B cell (primary cell): ENCODE measurements at regions of chr2 and their contacts with region 1.

Region 1: GRCh38 chr2:127526149-127527000 is at the start of gene IWS1:
- DNase-seq: peak; percentile 97
- ATAC-seq: peak; percentile 87
- H3K4me3 ChIP-seq: peak within 1 kb of the TSS; percentile 67 to 98 (median 91)
- H3K4me3 Mint-ChIP-seq: peak within 1 kb of the TSS; percentile 99
- H3K27ac ChIP-seq: peak within 1 kb of the TSS; percentile 95 to 98
- H3K27ac Mint-ChIP-seq: peak within 1 kb of the TSS; percentile 98
- H3K4me1 ChIP-seq: peaks cover 17 to 21% of the 10 kb centered on the region in 2 donors
- H3K4me1 Mint-ChIP-seq: peaks cover 36% of the 10 kb centered on the region
- H3K27me3 ChIP-seq: no peaks in the 10 kb centered on the region
- H3K27me3 Mint-ChIP-seq: no peaks in the 10 kb centered on the region
- CTCF ChIP-seq: no peak
- total RNA-seq, gene IWS1: 45.9 and 49.6 TPM in 2 replicates

Region 2: DNA sequence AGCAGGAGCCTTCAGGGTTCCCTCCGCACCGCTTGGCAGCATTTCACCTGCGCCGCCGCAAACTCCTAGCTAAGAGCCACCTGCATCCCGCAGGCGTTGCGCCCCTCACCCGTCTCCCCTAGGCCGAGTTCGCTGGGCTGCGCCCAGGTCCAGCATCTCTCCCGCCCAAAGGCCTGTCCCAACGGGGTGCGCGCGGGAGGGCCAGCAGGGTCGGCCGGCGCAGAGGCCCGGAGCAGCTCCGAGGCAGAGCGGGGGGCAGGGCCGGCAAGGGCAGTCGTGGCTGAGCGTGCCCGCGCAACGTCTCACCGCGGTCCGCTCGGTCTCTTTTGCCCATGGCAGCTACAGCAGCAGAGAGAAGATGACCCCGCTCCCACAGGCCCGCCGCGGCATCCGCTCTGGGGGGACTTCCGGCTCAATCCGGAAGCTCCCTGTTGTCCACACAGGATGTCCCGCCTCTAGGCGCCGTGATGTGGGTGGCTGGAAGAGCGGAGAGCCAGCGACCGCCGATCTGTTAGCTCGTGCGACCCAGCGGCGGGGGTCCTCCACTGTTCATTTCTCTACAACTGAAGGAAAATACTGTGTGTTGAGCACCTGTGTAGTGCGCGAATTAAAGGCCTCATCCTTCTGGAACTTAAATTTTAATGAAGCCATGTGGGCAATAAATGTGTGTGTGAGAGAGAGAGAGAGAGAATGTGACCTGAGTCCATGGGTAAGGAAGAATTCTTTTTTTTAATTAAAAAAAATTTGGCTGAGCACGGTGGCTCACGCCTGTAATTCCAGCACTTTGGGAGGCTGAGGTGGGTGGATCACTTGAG is 232.4 kb before region 1 on chr2 and contains the start of gene ERCC3:
- CTCF ChIA-PET with region 1: no interaction called
- POLR2A ChIA-PET with region 1: no interaction called
- intact Hi-C with region 1: loop called (anchors 1 kb)
- DNase-seq: peak; percentile 86
- ATAC-seq: peak; percentile 96
- H3K4me3 ChIP-seq: peak within 1 kb of the TSS; percentile 82 to 97 (median 88)
- H3K4me3 Mint-ChIP-seq: peak within 1 kb of the TSS; percentile 100
- H3K27ac ChIP-seq: peak within 1 kb of the TSS; percentile 46 to 84
- H3K27ac Mint-ChIP-seq: peak within 1 kb of the TSS; percentile 95
- H3K4me1 ChIP-seq: peaks cover 5 to 22% of the 10 kb centered on the region in 2 donors
- H3K4me1 Mint-ChIP-seq: peaks cover 31% of the 10 kb centered on the region
- H3K27me3 ChIP-seq: no peaks in the 10 kb centered on the region
- H3K27me3 Mint-ChIP-seq: no peaks in the 10 kb centered on the region
- CTCF ChIP-seq: no peak
- total RNA-seq, gene ERCC3: 74.8 and 79.3 TPM in 2 replicates

Region 3: GRCh38 chr2:127415593-127416505 is 110.5 kb before region 1 on chr2:
- CTCF ChIA-PET with region 1: no interaction called
- POLR2A ChIA-PET with region 1: no interaction called
- intact Hi-C with region 1: loop called (anchors 5 kb)
- DNase-seq: peak; percentile 88
- ATAC-seq: peak; percentile 89
- H3K4me3 ChIP-seq: peak overlapping the region; percentile 51 to 72 (median 60)
- H3K4me3 Mint-ChIP-seq: peak overlapping the region; percentile 88
- H3K27ac ChIP-seq: no peak overlapping the region
- H3K27ac Mint-ChIP-seq: peak overlapping the region; percentile 65
- H3K4me1 ChIP-seq: peaks cover 31 to 37% of the 10 kb centered on the region in 2 donors
- H3K4me1 Mint-ChIP-seq: peaks cover 52% of the 10 kb centered on the region
- H3K27me3 ChIP-seq: no peaks in the 10 kb centered on the region
- H3K27me3 Mint-ChIP-seq: no peaks in the 10 kb centered on the region
- CTCF ChIP-seq: peak; percentile 90

Region 4: DNA sequence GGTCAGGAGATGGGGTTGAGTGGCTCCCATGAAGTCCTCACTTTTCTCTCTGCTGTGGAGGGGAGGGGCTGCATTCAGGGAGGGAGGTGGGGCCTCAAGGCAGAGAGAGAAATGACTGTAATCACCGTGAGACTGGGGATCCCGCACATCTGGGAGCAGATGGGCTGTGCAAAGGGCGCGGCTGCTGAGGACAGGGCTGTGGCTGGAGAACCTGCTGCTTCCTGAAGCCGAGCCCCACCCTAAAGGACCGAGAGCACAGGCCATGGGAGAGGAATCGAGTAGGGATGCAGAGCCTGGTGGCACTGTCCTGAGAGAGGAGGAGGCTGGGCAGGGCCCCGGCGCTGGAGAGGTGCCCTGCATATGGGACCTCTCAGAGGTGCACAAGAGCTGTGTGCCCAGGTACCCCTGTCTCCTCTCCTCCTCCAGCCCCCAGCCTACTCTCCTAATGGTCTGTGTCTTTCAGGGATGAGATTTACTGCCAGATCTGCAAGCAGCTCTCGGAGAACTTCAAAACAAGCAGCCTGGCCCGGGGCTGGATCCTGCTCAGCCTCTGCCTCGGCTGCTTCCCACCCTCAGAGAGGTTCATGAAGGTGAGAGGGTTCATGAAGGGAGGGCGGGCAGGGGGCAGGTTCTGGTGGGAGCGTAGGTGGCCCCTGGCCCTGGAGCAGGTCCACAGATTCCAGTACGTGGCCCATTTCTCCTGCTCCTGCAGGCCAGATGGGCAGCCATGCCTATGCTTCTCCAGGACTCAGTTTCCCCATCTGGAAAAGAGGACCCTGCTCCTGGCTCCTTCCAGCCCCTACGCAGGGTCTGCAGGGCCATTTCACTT is 93.7 kb after region 1 on chr2:
- CTCF ChIA-PET with region 1: no interaction called
- POLR2A ChIA-PET with region 1: no interaction called
- intact Hi-C with region 1: loop called (anchors 1 kb)
- DNase-seq: no peak
- ATAC-seq: peak; percentile 20
- H3K4me3 ChIP-seq: peak overlapping the region in 3 of 5 experiments; percentile 19 to 52 (median 44)
- H3K4me3 Mint-ChIP-seq: peak overlapping the region; percentile 79
- H3K27ac ChIP-seq: peak overlapping the region in 1 of 2 donors; percentile 63
- H3K27ac Mint-ChIP-seq: peak overlapping the region; percentile 91
- H3K4me1 ChIP-seq: peaks cover 26 to 74% of the 10 kb centered on the region in 2 donors
- H3K4me1 Mint-ChIP-seq: peaks cover 79% of the 10 kb centered on the region
- H3K27me3 ChIP-seq: no peaks in the 10 kb centered on the region
- H3K27me3 Mint-ChIP-seq: no peaks in the 10 kb centered on the region
- CTCF ChIP-seq: no peak

Region 5: DNA sequence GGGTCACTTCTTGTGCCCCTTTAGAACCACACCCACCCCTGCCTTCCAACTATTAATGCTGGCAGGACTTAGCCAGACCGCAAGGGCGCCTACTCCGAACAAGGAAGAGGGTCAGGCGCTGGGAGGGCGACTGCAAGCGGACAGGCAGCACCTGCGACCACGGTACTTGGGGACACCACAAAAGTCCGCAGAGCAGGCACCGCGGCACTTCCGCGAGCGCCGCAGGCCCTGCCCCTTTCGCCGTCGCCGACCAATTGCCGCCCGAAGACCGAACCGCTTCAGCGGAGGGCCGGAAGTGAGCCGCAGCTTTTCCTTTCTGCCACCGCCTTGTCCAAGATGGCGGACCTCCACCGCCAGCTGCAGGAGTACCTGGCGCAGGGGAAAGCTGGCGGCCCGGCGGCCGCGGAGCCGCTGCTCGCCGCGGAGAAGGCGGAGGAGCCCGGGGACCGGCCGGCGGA is 174.8 kb after region 1 on chr2 and contains the start of gene SFT2D3:
- CTCF ChIA-PET with region 1: interaction called, 4 read pairs
- POLR2A ChIA-PET with region 1: no interaction called
- intact Hi-C with region 1: loop called (anchors 1 kb)
- DNase-seq: peak; percentile 95
- ATAC-seq: peak; percentile 74
- H3K4me3 ChIP-seq: peak within 1 kb of the TSS; percentile 69 to 84 (median 77)
- H3K4me3 Mint-ChIP-seq: peak within 1 kb of the TSS; percentile 98
- H3K27ac ChIP-seq: peak within 1 kb of the TSS; percentile 91 to 95
- H3K27ac Mint-ChIP-seq: peak within 1 kb of the TSS; percentile 100
- H3K4me1 ChIP-seq: peaks cover 29% of the 10 kb centered on the region in 2 donors
- H3K4me1 Mint-ChIP-seq: peaks cover 35% of the 10 kb centered on the region
- H3K27me3 ChIP-seq: no peaks in the 10 kb centered on the region
- H3K27me3 Mint-ChIP-seq: no peaks in the 10 kb centered on the region
- CTCF ChIP-seq: no peak
- total RNA-seq, gene SFT2D3: 13.6 and 14.2 TPM in 2 replicates

Region 6: DNA sequence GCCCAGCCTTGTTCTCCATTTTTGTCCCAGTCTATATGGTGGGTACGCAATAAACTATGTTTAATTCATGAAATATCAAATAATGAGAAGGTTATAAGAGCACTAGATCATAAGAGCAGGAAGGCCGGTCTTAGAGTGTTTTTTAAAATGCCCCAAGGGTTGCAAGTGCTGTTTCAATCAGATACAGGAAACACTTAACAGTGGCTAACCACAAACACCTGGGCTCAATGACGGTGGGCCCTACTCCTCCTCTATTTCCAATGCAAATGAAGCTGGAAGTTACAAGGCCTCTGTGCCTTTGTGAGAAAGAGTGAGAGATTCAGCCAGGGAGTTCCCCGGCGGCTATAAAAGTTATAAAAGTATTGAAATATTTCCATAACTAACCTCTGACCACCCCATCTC is 303.5 kb after region 1 on chr2:
- CTCF ChIA-PET with region 1: no interaction called
- POLR2A ChIA-PET with region 1: no interaction called
- intact Hi-C with region 1: loop called (anchors 1 kb)
- DNase-seq: peak; percentile 91
- ATAC-seq: peak; percentile 92
- H3K4me3 ChIP-seq: peak overlapping the region in 2 of 5 experiments; percentile 17 to 18
- H3K4me3 Mint-ChIP-seq: peak overlapping the region; percentile 75
- H3K27ac ChIP-seq: peak overlapping the region; percentile 42 to 53
- H3K27ac Mint-ChIP-seq: peak overlapping the region; percentile 80
- H3K4me1 ChIP-seq: peaks cover 37 to 44% of the 10 kb centered on the region in 2 donors
- H3K4me1 Mint-ChIP-seq: peaks cover 50% of the 10 kb centered on the region
- H3K27me3 ChIP-seq: peaks cover 0 to 56% (median 8%) of the 10 kb centered on the region in 4 experiments
- H3K27me3 Mint-ChIP-seq: peaks cover 18% of the 10 kb centered on the region
- CTCF ChIP-seq: no peak

Region 7: DNA sequence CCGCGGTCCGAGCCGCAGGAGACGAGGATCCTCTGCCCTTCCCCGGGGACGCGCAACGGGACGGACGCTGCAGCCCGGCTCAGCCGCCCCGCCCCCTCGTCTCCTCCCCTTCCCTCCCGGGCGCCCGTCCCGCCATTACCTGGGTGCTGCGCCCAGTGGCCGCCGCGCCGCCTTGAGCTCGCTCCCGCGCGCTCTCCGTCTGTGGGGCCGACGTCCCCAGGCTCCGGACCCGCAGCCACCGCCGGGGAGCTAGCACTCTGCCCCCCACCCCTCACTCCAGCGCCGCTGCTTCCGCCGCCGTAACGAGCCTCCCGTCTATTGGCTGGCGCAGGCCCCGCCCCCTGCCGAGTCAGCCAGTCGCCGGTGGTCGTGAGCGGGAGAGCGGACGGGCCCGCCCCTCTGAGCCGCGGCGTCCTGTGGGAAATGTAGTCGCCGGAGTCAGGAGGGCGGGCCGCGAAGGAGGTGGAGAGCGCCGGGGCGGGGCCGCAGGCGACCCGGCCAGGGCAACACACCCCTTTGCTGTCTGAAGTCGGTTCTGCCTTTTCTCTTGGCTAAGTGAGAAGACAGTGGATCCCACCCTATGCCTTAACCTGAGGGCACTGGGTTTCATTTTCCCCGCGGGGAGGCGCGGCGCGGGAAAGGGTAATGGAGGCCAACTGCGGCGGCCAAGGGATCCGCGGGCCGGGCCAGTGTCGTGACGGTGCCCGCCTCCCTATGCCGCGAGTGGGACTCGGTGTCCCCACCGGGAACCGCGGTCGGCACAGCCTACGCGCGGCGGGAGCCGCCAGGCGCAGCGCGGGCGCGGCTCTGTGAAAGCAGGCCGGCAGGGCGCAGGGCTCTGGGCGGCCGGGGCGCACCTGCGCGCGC is 501.7 kb after region 1 on chr2 and contains the start of gene SAP130:
- CTCF ChIA-PET with region 1: no interaction called
- POLR2A ChIA-PET with region 1: no interaction called
- intact Hi-C with region 1: loop called (anchors 1 kb)
- DNase-seq: peak; percentile 98
- ATAC-seq: peak; percentile 77
- H3K4me3 ChIP-seq: peak within 1 kb of the TSS; percentile 38 to 93 (median 87)
- H3K4me3 Mint-ChIP-seq: peak within 1 kb of the TSS; percentile 97
- H3K27ac ChIP-seq: peak within 1 kb of the TSS; percentile 68 to 81
- H3K27ac Mint-ChIP-seq: peak within 1 kb of the TSS; percentile 97
- H3K4me1 ChIP-seq: peaks cover 13 to 14% of the 10 kb centered on the region in 2 donors
- H3K4me1 Mint-ChIP-seq: peaks cover 20% of the 10 kb centered on the region
- H3K27me3 ChIP-seq: no peaks in the 10 kb centered on the region
- H3K27me3 Mint-ChIP-seq: peaks cover 5% of the 10 kb centered on the region
- CTCF ChIP-seq: no peak
- total RNA-seq, gene SAP130: 35.2 and 40.1 TPM in 2 replicates